ENCODE measurements at regions of chr5 and their contacts with region 1.

Region 1: GRCh38 chr5:158435161-158435616 is 576.2 kb upstream of the CLINT1 start:
- DNase-seq: peak; percentile 68
- H3K4me3 ChIP-seq: no peak overlapping the region
- H3K27ac ChIP-seq: peak overlapping the region; percentile 62
- H3K4me1 ChIP-seq: peaks cover 73% of the 10 kb centered on the region
- CTCF ChIP-seq: no peak

Region 2: GRCh38 chr5:158074992-158075769 is 360.0 kb before region 1 on chr5:
- CTCF ChIA-PET with region 1: no interaction called
- POLR2A ChIA-PET with region 1: no interaction called
- intact Hi-C with region 1: no loop called
- DNase-seq: peak; percentile 69
- H3K4me3 ChIP-seq: no peak overlapping the region
- H3K27ac ChIP-seq: no peak overlapping the region
- H3K4me1 ChIP-seq: peaks cover 4% of the 10 kb centered on the region
- CTCF ChIP-seq: peak; percentile 98

Region 3: DNA sequence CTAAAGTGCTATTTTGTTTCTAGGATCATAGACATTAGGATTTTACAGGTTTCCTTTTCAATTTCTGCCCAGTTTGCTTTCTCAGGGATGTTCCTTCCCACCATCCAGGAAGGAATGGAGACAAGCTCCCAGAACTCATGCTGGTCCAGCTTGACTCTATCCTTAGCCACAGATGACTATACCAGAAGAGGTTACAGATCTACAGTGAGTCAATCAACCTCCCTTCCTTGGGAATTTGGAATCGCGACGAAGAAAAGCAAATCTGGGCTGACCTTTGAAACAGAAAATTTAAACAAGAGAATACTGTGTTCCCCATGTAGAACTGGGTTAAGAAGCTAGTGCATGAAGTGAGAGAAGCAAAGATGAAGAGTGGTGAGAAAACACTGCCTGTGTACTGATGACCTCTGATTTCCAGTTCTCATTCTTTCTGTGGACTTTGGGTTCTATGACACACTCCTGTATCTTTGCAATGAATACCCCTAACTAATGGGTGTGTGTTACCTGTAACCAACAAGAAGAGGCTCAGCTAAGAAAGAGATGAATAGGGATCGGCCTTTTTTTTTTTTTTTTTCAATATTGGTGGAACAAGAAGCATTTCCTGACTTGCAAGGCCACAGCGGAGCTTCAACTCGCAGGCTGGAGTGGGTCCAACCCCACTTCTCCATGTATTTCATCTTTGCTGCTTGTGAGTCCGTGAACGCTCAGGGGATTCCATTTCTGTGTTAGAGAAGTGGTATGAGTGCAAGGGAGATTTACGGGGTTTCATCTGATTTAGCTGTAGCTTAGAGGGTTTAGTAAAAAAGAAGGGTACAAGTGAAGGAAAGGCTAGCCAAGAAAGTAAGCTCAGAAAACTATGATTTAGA is 12.3 kb before region 1 on chr5:
- CTCF ChIA-PET with region 1: no interaction called
- POLR2A ChIA-PET with region 1: interaction called, 15 read pairs
- intact Hi-C with region 1: no loop called
- DNase-seq: no peak
- H3K4me3 ChIP-seq: no peak overlapping the region
- H3K27ac ChIP-seq: no peak overlapping the region
- H3K4me1 ChIP-seq: peaks cover 20% of the 10 kb centered on the region
- CTCF ChIP-seq: no peak

Region 4: DNA sequence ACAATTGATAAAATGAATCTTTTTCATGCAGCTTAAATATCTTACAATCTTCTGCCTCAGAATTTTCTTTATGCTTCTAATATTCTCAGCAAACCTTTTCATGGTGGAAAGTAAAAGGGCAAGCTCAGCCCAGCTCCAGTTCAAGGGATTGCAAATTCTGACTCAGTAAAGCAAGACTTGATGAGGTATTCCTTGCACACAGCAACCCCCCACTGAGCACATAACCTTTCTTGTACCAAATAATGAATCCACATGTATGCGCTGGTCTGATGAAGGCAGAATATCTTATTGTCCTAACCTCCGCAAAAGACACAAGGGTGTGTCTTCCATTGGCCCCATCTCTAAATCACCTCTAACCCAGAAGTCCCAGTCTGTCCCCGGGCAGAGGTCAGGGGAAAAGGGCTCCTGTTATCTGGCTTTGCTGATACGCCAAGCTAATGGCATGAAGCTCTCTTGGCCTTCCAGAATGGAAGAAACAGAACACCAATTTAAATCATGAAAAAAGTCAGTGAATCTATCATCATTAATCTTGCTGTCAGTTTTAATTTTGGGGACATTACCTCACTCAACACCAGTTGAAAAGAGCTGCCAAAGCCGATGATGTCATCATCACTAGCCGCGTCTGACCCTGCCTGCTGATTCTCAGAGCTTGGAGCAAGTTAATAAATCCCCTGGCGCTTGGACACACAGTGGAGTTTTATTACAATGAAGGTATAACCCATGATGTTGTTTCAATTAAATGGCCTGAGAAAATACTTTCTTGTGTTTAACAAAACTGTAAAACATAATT is 16.2 kb after region 1 on chr5:
- CTCF ChIA-PET with region 1: no interaction called
- POLR2A ChIA-PET with region 1: interaction called, 11 read pairs
- intact Hi-C with region 1: no loop called
- DNase-seq: no peak
- H3K4me3 ChIP-seq: no peak overlapping the region
- H3K27ac ChIP-seq: no peak overlapping the region
- H3K4me1 ChIP-seq: no peaks in the 10 kb centered on the region
- CTCF ChIP-seq: no peak

Region 5: DNA sequence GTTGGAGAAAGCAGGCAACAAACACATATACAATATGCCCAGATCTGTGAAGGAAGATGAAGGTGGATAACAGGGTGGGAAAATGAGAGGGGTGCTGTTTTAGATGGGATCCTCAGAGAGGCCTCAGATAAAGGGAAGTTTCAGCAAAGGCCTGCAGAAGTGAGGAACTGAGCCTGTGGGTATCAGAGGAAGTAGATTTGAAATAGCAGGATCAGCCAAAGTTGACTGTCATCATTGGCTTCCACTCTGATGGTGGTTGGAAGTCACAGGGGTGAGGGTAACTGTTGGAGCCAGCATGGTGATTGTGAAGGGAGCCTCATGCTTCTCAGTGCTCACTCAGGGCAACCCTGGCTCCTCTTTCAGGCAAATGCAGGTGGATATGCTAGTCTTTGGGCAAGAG is 31.0 kb after region 1 on chr5:
- CTCF ChIA-PET with region 1: no interaction called
- POLR2A ChIA-PET with region 1: no interaction called
- intact Hi-C with region 1: loop called (anchors 2 kb)
- DNase-seq: no peak
- H3K4me3 ChIP-seq: no peak overlapping the region
- H3K27ac ChIP-seq: no peak overlapping the region
- H3K4me1 ChIP-seq: peaks cover 27% of the 10 kb centered on the region
- CTCF ChIP-seq: no peak

Measured in OCI-LY7 (cell line).